ENCODE measurements at regions of chr1 and their contacts with region 1.

Region 1: DNA sequence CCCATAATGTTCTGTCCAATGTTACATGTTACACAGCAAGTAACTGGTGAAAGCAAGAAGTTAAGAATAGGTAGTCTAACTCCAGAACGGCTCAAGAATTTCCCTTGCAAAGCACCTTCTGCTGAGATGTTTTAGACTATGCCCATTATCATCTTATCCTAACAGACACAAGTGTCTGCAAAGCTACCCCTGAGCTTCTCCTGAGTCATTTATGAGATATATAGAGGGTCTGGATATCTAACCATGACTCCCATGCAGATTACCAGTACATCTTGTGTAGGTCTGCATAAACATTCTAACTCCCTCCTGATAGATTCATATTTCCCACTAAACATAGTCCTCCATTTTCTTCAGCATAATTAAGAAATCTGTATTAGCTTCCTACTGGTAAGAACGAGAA is 171.7 kb downstream of the COQ8A start:
- DNase-seq: no peak
- ATAC-seq: no peak

Region 2: GRCh38 chr1:227043755-227044154 is 68.0 kb before region 1 on chr1:
- intact Hi-C with region 1: loop called (anchors 2 kb)
- DNase-seq: no peak
- ATAC-seq: no peak